Vagina (tissue), 2 donors: ENCODE measurements at regions of chr1 and their contacts with region 1.

Region 1: DNA sequence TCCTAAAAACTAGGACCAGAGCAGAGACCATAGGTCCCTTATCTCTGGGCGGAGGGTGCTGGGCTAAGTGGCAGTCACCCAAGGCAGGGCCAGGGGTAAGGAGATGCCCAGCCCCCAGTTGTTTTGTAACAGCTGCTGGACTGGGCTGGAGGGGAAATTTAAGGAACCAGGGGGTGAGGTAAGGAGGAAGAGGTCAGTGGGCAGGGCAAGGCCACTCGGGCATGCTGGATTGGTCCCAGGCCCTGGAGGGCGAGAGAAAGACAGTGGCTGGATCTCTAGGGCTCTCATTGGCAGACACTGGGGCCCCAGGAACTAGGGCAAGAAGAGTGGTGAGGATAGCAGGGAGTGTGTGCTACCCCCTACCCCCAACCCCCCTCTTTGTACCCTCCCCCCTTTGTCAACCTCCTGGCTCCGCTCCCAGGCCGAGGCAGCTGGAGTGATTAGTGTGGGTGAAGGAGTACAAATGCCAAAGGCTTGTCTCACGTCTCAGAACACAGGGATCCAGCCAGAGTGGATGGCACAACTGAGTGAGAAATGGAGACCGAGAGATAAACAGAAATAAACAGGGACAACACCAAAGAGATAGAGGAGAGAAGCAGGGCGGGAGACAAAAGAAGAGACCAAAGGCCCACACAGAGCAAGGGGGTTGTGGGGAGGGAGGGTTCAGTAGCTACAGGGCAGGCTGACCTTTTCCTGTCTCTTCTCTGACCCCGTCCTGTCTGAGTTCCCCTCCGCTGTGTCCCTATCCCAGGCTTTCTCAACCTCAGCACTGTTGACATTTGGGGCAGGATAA is 20.5 kb upstream of the THRAP3 start:
- DNase-seq: no peak
- H3K4me3 ChIP-seq: no peak overlapping the region
- H3K27ac ChIP-seq: peak overlapping the region; percentile 69
- H3K4me1 ChIP-seq: peaks cover 23% of the 10 kb centered on the region
- H3K27me3 ChIP-seq: no peaks in the 10 kb centered on the region
- CTCF ChIP-seq: no peak
- POLR2A ChIP-seq: no peak

Region 2: GRCh38 chr1:35971601-35972000 is 232.1 kb before region 1 on chr1:
- intact Hi-C with region 1: no loop called
- DNase-seq: no peak
- H3K4me3 ChIP-seq: no peak overlapping the region
- H3K27ac ChIP-seq: no peak overlapping the region
- H3K4me1 ChIP-seq: no peaks in the 10 kb centered on the region
- H3K27me3 ChIP-seq: no peaks in the 10 kb centered on the region
- CTCF ChIP-seq: no peak
- POLR2A ChIP-seq: no peak

Region 3: DNA sequence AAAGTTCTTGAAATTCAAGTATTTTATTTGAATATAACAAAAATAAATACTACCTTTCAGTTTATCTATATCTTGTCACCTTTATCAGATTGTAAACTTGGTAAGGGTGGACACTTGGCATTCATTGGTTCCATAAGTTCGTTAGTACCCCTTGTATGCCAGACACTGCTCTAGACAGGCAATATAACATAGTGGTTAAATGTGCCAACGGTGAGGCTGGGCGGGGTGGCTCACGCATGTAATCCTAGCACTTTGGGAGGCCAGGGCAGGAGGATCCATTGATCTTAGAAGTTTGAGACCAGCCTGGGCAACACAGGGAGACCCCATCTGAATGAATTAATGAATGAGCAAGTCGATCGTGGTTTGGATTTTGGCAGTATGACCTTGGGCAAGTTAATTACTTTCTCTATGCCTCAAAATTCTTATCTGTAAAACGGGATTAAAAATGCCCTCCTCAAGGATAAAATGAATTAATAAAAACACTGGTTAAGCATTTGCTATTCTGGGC is 76.1 kb after region 1 on chr1:
- intact Hi-C with region 1: loop called (anchors 2 kb)
- DNase-seq: no peak
- H3K4me3 ChIP-seq: no peak overlapping the region
- H3K27ac ChIP-seq: no peak overlapping the region
- H3K4me1 ChIP-seq: peaks cover 24% of the 10 kb centered on the region
- H3K27me3 ChIP-seq: no peaks in the 10 kb centered on the region
- CTCF ChIP-seq: no peak
- POLR2A ChIP-seq: no peak